GM12878 (cell line): ENCODE measurements at regions of chr7 and their contacts with region 1.

Region 1: GRCh38 chr7:116525913-116526861 is 1.4 kb downstream of the CAV1 start:
- DNase-seq: no peak
- ATAC-seq: peak; percentile 96
- H3K4me3 ChIP-seq: peak overlapping the region; percentile 69
- H3K27ac ChIP-seq: no peak overlapping the region
- H3K4me1 ChIP-seq: peaks cover 26% of the 10 kb centered on the region
- H3K27me3 ChIP-seq: 0 out of 4 replicates have a peak, but pooled peaks cover 0 to 3% of the 10 kb centered on the region in 2 experiments
- CTCF ChIP-seq: peak; percentile 70 to 79 (median 71); a peak in 5 of 6 replicates
- EP300 ChIP-seq: no peak
- POLR2A ChIP-seq: no peak
- RAD21 ChIP-seq: peak; percentile 57

Region 2: DNA sequence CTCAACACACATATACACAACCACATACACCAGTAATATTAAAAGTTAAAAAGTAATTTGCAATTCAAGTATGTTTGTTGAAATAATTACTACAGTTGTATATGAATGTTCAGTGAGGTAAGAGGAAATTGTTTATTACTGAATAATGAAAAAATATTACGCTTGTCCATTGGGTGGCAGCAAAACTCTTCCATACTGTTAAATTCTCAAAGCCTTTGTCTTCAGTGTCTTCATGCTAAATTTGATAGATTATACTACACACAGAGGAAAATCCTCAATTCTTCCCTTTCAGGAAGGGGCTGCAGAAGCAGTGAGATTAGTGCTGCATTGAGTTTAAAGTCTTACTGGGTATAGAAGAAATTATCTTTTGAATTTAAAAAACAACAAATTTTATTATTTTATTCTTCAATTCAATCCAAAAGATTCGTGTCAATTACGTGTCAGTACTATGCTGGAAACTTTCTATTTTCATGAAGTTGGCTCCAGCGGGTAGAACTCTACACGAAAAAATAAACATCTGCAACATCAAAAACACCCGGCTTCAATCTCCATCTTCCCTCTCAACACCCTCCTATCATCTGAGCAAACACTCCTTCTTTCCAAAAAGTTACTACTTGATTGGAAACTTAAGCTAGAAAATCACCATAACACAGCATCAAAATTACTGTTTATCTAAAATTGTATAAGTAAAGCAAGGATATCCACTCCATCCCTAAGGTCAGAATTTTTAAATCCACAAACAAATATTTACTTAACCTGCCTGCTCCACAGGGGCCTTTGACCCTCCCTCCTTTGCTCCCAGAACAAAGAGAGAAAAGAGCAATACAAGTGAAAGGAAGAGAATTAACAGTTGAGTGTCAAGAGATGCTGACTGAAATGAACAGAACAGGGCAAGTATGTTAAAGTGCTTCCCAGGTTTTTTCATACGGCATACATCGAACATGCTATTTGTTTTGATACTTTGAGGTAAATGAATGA is 352.8 kb before region 1 on chr7:
- CTCF ChIA-PET with region 1: no interaction called
- POLR2A ChIA-PET with region 1: no interaction called
- RAD21 ChIA-PET with region 1: no interaction called
- SMC1A ChIA-PET with region 1: no interaction called
- in situ Hi-C with region 1: no loop called
- intact Hi-C with region 1: loop called (anchors 5 kb)
- DNase-seq: no peak
- ATAC-seq: peak; percentile 74
- H3K4me3 ChIP-seq: no peak overlapping the region
- H3K27ac ChIP-seq: no peak overlapping the region
- H3K4me1 ChIP-seq: no peaks in the 10 kb centered on the region
- H3K27me3 ChIP-seq: no peaks in the 10 kb centered on the region
- CTCF ChIP-seq: peak; percentile 28 to 67 (median 31); a peak in 4 of 6 replicates
- EP300 ChIP-seq: no peak
- POLR2A ChIP-seq: no peak
- RAD21 ChIP-seq: peak; percentile 76

Region 3: DNA sequence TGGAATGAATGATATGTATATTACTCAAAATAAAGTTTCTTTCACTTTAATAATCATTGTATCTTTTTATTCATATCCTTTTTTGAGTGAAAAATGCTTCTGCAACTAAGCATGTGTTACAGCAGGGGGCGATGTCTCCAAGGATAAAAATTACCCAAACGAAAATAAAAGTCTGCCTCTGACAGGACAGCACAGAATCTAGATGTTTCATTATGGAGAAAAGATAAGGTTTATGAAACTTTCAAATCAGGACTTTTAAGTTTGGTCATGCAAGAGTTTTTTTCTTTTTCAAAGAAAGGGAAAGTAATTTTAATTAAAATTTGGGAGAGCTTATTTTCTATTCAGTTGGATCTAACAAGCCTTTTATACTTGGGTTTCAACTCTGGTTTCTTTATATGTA is 267.5 kb before region 1 on chr7:
- CTCF ChIA-PET with region 1: interaction called, 29 read pairs
- POLR2A ChIA-PET with region 1: no interaction called
- RAD21 ChIA-PET with region 1: interaction called, 20 read pairs
- SMC1A ChIA-PET with region 1: interaction called, 16 read pairs
- in situ Hi-C with region 1: no loop called
- intact Hi-C with region 1: loop called (anchors 2 kb)
- DNase-seq: peak; percentile 23
- ATAC-seq: peak; percentile 59
- H3K4me3 ChIP-seq: no peak overlapping the region
- H3K27ac ChIP-seq: no peak overlapping the region
- H3K4me1 ChIP-seq: no peaks in the 10 kb centered on the region
- H3K27me3 ChIP-seq: no peaks in the 10 kb centered on the region
- CTCF ChIP-seq: peak; percentile 53 to 76 (median 65); a peak in 5 of 6 replicates
- EP300 ChIP-seq: no peak
- POLR2A ChIP-seq: no peak
- RAD21 ChIP-seq: peak; percentile 92

Region 4: DNA sequence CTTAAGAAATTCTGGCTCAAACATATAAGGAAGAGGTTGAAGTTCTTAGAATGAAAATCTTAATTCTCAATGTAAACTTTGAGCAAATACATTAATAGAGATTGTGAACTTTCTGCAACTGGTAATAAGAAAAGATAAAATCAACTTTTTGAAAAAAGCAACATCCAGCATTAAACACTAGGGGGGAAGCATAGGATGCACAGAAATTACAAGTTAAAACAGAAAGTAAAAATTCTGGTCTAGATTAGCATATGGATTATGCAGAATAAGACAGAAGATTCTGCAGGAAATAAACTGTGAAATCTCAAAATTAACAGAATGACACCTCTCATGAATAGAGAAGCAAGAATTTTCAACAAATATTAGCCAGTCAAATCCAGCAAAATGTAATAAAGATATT is 64.7 kb before region 1 on chr7:
- CTCF ChIA-PET with region 1: no interaction called
- POLR2A ChIA-PET with region 1: no interaction called
- RAD21 ChIA-PET with region 1: no interaction called
- SMC1A ChIA-PET with region 1: no interaction called
- in situ Hi-C with region 1: no loop called
- intact Hi-C with region 1: no loop called
- DNase-seq: no peak
- ATAC-seq: no peak
- H3K4me3 ChIP-seq: no peak overlapping the region
- H3K27ac ChIP-seq: no peak overlapping the region
- H3K4me1 ChIP-seq: no peaks in the 10 kb centered on the region
- H3K27me3 ChIP-seq: no peaks in the 10 kb centered on the region
- CTCF ChIP-seq: peak in 1 of 3 experiments; percentile 9; a peak in 1 of 6 replicates
- EP300 ChIP-seq: no peak
- POLR2A ChIP-seq: no peak
- RAD21 ChIP-seq: no peak

Region 5: GRCh38 chr7:116548506-116548905 is 22.3 kb after region 1 on chr7:
- CTCF ChIA-PET with region 1: interaction called, 13 read pairs
- POLR2A ChIA-PET with region 1: no interaction called
- RAD21 ChIA-PET with region 1: no interaction called
- SMC1A ChIA-PET with region 1: interaction called, 4 read pairs
- in situ Hi-C with region 1: no loop called
- intact Hi-C with region 1: no loop called
- DNase-seq: peak; percentile 43
- ATAC-seq: peak; percentile 97
- H3K4me3 ChIP-seq: no peak overlapping the region
- H3K27ac ChIP-seq: no peak overlapping the region
- H3K4me1 ChIP-seq: peaks cover 14% of the 10 kb centered on the region
- H3K27me3 ChIP-seq: no peaks in the 10 kb centered on the region
- CTCF ChIP-seq: no peak
- EP300 ChIP-seq: no peak
- POLR2A ChIP-seq: no peak
- RAD21 ChIP-seq: no peak

Region 6: GRCh38 chr7:116576350-116577319 is 50.4 kb after region 1 on chr7:
- CTCF ChIA-PET with region 1: interaction called, 5 read pairs
- POLR2A ChIA-PET with region 1: interaction called, 4 read pairs
- RAD21 ChIA-PET with region 1: interaction called, 13 read pairs
- SMC1A ChIA-PET with region 1: interaction called, 9 read pairs
- in situ Hi-C with region 1: no loop called
- intact Hi-C with region 1: no loop called
- DNase-seq: no peak
- ATAC-seq: peak; percentile 65
- H3K4me3 ChIP-seq: no peak overlapping the region
- H3K27ac ChIP-seq: no peak overlapping the region
- H3K4me1 ChIP-seq: peaks cover 25% of the 10 kb centered on the region
- H3K27me3 ChIP-seq: no peaks in the 10 kb centered on the region
- CTCF ChIP-seq: no peak
- EP300 ChIP-seq: no peak
- POLR2A ChIP-seq: no peak
- RAD21 ChIP-seq: no peak

Region 7: GRCh38 chr7:116582806-116583444 is 56.7 kb after region 1 on chr7:
- CTCF ChIA-PET with region 1: interaction called, 22 read pairs
- POLR2A ChIA-PET with region 1: no interaction called
- RAD21 ChIA-PET with region 1: interaction called, 16 read pairs
- SMC1A ChIA-PET with region 1: interaction called, 9 read pairs
- in situ Hi-C with region 1: no loop called
- intact Hi-C with region 1: loop called (anchors 1 kb)
- DNase-seq: no peak
- ATAC-seq: peak; percentile 78
- H3K4me3 ChIP-seq: no peak overlapping the region; the same call in 1 of the 2 replicates
- H3K27ac ChIP-seq: peak overlapping the region; percentile 89
- H3K4me1 ChIP-seq: peaks cover 37% of the 10 kb centered on the region
- H3K27me3 ChIP-seq: no peaks in the 10 kb centered on the region
- CTCF ChIP-seq: no peak
- EP300 ChIP-seq: no peak
- POLR2A ChIP-seq: no peak
- RAD21 ChIP-seq: no peak